ENCODE measurements at regions of chr18 and their contacts with region 1.

Region 1: DNA sequence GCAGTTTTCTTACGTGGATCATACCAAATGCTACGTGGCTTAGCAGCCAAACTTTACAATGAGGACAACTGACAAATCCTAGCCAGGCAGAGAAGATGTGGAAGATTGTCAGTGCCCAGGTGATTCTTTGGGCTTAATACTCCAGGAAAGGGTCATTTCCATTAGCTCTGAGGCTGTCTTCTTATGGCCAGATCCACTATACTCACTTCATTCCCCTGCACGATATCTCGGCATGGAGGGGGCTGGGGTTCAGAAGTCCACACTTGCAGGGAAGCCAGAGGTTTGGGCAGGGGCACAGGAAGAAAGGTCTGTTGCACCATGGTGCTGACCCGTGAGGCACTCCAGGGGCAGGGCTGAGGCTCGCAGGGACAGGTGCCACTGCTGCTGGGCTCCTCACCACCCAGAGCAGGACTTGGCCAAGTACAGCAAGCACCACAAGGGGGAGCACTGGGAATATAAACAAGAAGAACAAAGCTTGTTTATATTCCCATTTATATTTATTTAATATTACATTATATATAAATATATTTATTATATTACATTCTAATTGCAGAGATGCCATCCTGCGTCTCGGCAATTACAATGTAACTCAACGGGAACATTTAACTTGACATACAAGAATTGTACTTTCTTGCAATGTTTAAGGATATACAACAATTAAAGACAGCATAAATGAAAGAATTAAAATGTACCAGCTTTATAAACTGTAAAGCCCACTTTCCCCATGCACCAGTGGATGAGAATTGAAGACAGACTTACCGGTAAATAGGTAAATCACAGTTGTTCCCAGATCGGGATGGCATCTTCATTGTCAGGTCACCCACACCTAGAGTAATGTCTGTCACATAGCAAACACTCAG is 27.2 kb downstream of the CLUL1 start:
- DNase-seq: peak; percentile 53 to 80
- ATAC-seq: peak; percentile 86

Region 2: GRCh38 chr18:839224-840022 is 215.4 kb after region 1 on chr18:
- intact Hi-C with region 1: loop called in 1 of 2 experiments (anchors 10 kb)
- DNase-seq: peak; percentile 71 to 89
- ATAC-seq: peak; percentile 90

Measured in left colon (tissue), 2 donors.